CD8-positive, alpha-beta memory T cell (primary cell): ENCODE measurements at regions of chr19 and their contacts with region 1.

Region 1: GRCh38 chr19:7355151-7355820 is 6.5 kb downstream of the ARHGEF18 start:
- DNase-seq: no peak
- H3K4me3 ChIP-seq: no peak overlapping the region
- H3K4me3 Mint-ChIP-seq: peak overlapping the region in 3 of 7 donors; percentile 8 to 60 (median 47)
- H3K27ac ChIP-seq: no peak overlapping the region
- H3K27ac Mint-ChIP-seq: peak overlapping the region in 6 of 8 donors; percentile 49 to 98 (median 80)
- H3K4me1 ChIP-seq: peaks cover 75% of the 10 kb centered on the region
- H3K4me1 Mint-ChIP-seq: peaks cover 57 to 88% (median 82%) of the 10 kb centered on the region in 3 donors
- H3K27me3 ChIP-seq: no peaks in the 10 kb centered on the region
- H3K27me3 Mint-ChIP-seq: no peaks in the 10 kb centered on the region

Region 2: DNA sequence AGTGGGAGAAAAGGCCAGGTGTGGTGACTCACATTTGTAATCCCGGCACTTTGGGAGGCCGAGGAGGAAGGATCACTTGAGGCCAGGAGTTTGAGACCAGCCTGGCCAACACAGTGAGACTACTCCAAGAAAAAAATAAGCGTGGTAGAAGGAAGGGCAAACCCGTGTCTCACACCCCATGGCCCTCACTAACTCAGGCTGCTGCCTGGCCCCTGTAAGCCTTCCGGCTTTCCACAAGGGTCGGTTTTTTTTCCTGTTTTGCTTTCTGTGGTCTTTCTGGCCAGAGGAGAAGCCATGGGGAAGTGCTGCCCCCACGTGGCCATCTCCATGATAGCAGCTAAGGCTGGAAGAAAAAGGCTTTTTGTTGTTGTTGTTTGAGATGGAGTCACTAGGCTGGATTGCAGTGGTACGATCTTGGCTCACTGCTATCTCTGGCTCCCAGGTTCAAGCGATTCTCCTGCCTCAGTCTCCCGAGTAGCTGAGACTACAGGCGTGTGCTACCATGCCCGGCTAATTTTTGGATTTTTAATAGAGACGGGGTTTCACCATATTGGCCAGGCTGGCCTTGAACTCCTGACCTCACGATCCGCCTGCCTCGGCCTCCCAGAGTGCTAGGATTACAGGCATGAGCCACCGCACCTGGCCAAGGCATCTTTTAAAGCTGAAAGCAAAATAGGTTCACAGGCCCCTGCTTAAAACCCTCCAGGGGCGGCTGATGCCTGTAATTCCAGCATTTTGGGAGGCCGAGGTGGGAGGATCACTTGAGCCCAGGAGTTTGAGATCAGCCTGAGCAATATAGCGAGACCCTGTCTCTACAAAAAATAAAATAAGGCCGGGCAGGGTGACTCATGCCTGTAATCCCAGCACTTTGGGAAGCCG is 14.1 kb before region 1 on chr19:
- CTCF ChIA-PET with region 1: interaction called, 31 read pairs
- POLR2A ChIA-PET with region 1: interaction called, 16 read pairs
- DNase-seq: peak; percentile 63 to 85 (median 78)
- H3K4me3 ChIP-seq: no peak overlapping the region
- H3K4me3 Mint-ChIP-seq: peak overlapping the region; percentile 17 to 64 (median 41)
- H3K27ac ChIP-seq: no peak overlapping the region
- H3K27ac Mint-ChIP-seq: peak overlapping the region; percentile 61 to 94 (median 77)
- H3K4me1 ChIP-seq: peaks cover 63% of the 10 kb centered on the region
- H3K4me1 Mint-ChIP-seq: peaks cover 45 to 68% (median 57%) of the 10 kb centered on the region in 3 donors
- H3K27me3 ChIP-seq: no peaks in the 10 kb centered on the region
- H3K27me3 Mint-ChIP-seq: no peaks in the 10 kb centered on the region

Region 3: GRCh38 chr19:7366701-7367420 is 11.6 kb after region 1 on chr19:
- CTCF ChIA-PET with region 1: interaction called, 18 read pairs
- POLR2A ChIA-PET with region 1: no interaction called
- DNase-seq: peak in 1 of 5 donors; percentile 10
- H3K4me3 ChIP-seq: no peak overlapping the region
- H3K4me3 Mint-ChIP-seq: peak overlapping the region in 1 of 7 donors; percentile 8
- H3K27ac ChIP-seq: no peak overlapping the region
- H3K27ac Mint-ChIP-seq: peak overlapping the region in 6 of 8 donors; percentile 29 to 87 (median 70)
- H3K4me1 ChIP-seq: peaks cover 21% of the 10 kb centered on the region
- H3K4me1 Mint-ChIP-seq: peaks cover 26 to 40% (median 34%) of the 10 kb centered on the region in 3 donors
- H3K27me3 ChIP-seq: no peaks in the 10 kb centered on the region
- H3K27me3 Mint-ChIP-seq: no peaks in the 10 kb centered on the region

Region 4: GRCh38 chr19:7373862-7374261 is 18.6 kb after region 1 on chr19:
- CTCF ChIA-PET with region 1: interaction called, 14 read pairs
- POLR2A ChIA-PET with region 1: interaction called, 4 read pairs
- DNase-seq: no peak
- H3K4me3 ChIP-seq: no peak overlapping the region
- H3K4me3 Mint-ChIP-seq: no peak overlapping the region
- H3K27ac ChIP-seq: no peak overlapping the region
- H3K27ac Mint-ChIP-seq: peak overlapping the region in 1 of 8 donors; percentile 54
- H3K4me1 ChIP-seq: no peaks in the 10 kb centered on the region
- H3K4me1 Mint-ChIP-seq: peaks cover 0 to 5% (median 1%) of the 10 kb centered on the region in 3 donors
- H3K27me3 ChIP-seq: no peaks in the 10 kb centered on the region
- H3K27me3 Mint-ChIP-seq: no peaks in the 10 kb centered on the region

Region 5: GRCh38 chr19:7382694-7383093 is 27.4 kb after region 1 on chr19:
- CTCF ChIA-PET with region 1: interaction called, 15 read pairs
- POLR2A ChIA-PET with region 1: interaction called, 4 read pairs
- DNase-seq: no peak
- H3K4me3 ChIP-seq: no peak overlapping the region
- H3K4me3 Mint-ChIP-seq: no peak overlapping the region
- H3K27ac ChIP-seq: no peak overlapping the region
- H3K27ac Mint-ChIP-seq: peak overlapping the region in 2 of 8 donors; percentile 17 to 90
- H3K4me1 ChIP-seq: peaks cover 4% of the 10 kb centered on the region
- H3K4me1 Mint-ChIP-seq: peaks cover 12 to 38% (median 29%) of the 10 kb centered on the region in 3 donors
- H3K27me3 ChIP-seq: no peaks in the 10 kb centered on the region
- H3K27me3 Mint-ChIP-seq: no peaks in the 10 kb centered on the region

Region 6: DNA sequence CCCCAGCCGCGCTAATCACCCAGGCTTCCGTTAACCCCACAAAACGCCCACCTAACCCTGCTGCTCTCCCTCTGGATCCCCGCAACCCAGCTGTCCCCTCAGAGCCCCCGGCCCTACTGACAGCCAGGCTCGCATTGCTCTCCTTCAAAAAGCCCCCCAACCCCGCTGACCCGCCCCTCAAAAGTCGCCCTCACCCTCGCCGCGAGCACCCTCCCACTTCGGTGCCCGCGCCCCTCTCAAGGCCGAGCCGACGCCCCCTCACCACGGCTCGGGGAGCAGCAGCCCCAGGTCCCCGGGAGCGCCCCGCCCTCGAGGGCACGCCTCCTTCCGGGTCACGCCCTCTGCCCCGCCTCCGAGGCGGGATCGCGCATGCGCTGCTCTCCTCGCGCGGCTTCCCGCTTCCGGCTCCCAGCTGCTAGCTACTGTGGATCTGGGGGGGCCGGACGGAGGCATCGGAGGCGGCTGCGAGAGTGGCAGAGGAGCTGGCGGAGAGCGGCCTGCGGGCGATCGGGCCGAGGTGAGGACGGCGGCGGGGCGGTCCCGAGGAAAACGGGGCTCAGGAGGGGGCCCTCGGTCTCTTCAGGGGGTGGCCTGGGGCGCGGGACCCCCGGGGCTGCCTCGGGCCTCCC is 39.6 kb after region 1 on chr19:
- CTCF ChIA-PET with region 1: interaction called, 11 read pairs
- POLR2A ChIA-PET with region 1: no interaction called
- DNase-seq: peak; percentile 84 to 94 (median 90)
- H3K4me3 ChIP-seq: peak overlapping the region; percentile 54
- H3K4me3 Mint-ChIP-seq: peak overlapping the region; percentile 85 to 94 (median 90)
- H3K27ac ChIP-seq: peak overlapping the region; percentile 61
- H3K27ac Mint-ChIP-seq: peak overlapping the region; percentile 67 to 96 (median 82)
- H3K4me1 ChIP-seq: peaks cover 40% of the 10 kb centered on the region
- H3K4me1 Mint-ChIP-seq: peaks cover 31 to 57% (median 40%) of the 10 kb centered on the region in 3 donors
- H3K27me3 ChIP-seq: no peaks in the 10 kb centered on the region
- H3K27me3 Mint-ChIP-seq: peaks cover 0 to 1% of the 10 kb centered on the region in 2 donors